Calu3 (cell line): ENCODE measurements at regions of chr12 and their contacts with region 1.

Region 1: DNA sequence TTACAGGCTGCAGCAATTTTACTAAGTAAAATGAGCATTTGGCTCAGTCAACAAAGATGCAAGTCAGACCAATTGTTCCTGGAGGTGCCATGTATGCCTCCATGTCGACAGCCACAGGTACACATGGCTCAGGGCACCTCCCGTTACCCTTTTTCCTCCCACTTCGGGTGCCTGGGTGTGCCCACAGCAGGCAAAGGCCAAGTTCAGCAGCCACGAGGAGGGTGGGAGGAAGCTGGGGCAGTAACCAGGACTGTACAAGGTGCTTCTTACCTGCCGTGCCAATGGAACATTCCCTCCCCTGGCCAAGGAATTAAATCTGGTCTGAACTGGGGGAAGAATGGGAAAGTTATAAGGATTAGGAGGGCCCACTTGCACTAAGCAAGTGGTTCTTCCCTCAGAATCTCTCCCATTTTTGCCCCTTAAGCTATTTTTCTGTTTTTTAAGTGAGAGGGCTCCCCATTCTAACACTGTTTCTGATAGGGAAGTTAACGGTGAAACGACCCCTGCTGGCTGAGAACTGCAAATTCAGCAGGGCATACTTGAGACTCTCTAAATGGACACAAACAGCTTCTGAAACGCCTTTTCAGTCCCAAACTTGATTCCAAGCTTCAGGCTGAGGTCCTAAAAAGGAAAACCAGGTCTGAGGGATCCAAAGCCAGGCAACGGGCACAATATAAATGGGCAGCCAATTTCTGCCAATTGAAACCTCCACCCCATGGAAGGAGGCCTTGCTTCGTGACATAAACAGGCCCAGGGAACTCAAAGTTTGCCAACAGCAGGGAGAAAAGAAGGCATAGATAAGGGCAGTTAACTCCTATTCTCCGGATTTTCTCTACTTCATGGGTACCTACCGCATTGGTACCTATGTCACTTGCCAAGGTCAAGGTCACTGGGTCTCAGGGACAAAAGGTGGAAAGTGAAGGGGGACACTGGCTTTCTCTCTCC is 24.8 kb downstream of the CLECL1 start:
- DNase-seq: peak; percentile 52
- H3K4me3 Mint-ChIP-seq: no peak overlapping the region
- H3K27ac Mint-ChIP-seq: no peak overlapping the region
- H3K4me1 Mint-ChIP-seq: peaks cover 25% of the 10 kb centered on the region
- H3K27me3 Mint-ChIP-seq: no peaks in the 10 kb centered on the region
- CTCF ChIP-seq: peak; percentile 78

Region 2: DNA sequence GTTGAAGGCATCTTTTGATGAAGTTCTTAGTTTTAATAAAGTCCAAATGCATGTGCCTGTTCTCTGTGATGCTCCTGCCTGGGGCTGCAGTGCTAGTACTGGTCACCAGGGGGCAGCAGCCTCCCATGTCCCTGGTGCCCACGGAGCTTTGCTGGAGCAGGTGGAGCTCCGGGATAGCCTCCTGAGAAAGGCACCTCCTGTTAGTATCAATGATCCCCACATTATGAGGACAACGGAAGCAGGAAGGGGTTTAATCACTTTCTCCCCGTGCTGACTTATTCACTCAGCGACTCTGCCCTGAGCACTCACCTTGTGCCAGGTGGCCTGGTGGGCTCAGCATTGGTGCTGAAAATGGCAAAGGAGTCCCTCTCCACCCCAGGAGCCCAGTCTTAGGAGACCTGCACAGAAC is 376.9 kb before region 1 on chr12:
- CTCF ChIA-PET with region 1: interaction called, 6 read pairs
- intact Hi-C with region 1: loop called (anchors 5 kb)
- DNase-seq: peak; percentile 81
- H3K4me3 Mint-ChIP-seq: no peak overlapping the region
- H3K27ac Mint-ChIP-seq: no peak overlapping the region
- H3K4me1 Mint-ChIP-seq: peaks cover 13% of the 10 kb centered on the region
- H3K27me3 Mint-ChIP-seq: no peaks in the 10 kb centered on the region
- CTCF ChIP-seq: peak; percentile 94

Region 3: GRCh38 chr12:9634177-9634803 is 73.8 kb before region 1 on chr12:
- CTCF ChIA-PET with region 1: interaction called, 4 read pairs
- intact Hi-C with region 1: loop called (anchors 1 kb)
- DNase-seq: peak; percentile 72
- H3K4me3 Mint-ChIP-seq: no peak overlapping the region
- H3K27ac Mint-ChIP-seq: no peak overlapping the region
- H3K4me1 Mint-ChIP-seq: peaks cover 26% of the 10 kb centered on the region
- H3K27me3 Mint-ChIP-seq: peaks cover 17% of the 10 kb centered on the region
- CTCF ChIP-seq: peak; percentile 69

Region 4: DNA sequence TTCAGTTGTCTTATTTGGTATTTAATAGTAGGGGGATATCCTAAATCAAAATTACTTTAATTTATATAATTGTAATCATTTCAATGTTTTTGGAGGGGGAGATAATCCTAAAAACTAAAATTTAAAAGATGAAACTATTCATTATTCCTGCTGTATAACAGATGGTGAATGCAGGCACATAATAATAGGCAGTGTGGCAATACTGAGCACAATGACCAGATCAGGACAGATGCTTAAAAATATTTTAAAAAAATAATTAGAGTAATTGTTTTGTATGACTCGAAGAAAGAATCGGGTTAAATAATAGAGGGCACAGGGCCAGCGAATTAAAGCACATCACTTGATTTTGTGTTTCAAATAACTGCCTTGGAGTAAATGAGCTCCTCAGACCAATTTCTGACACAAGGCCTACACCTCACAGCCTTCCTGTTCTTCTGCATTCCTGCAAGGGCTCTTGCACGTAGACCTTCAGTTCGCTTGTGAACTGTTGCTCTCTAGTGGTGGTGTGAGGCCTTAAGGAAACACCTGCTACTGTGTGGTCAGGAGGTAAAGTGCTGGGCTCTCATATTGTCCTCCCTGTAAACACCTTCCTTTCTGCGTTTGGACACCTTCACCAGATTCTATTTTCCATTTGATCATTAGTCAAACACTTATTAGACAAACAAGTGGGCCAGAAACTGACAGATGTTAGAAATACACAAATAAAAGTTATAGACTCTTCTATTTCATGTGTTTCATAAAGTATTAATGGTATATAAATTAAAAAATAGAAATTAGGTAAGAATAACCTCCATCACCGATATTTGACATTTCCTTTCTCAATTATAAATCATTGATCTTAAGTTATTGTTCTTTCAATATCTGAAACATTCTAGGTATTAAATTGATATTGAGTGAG is 89.8 kb after region 1 on chr12:
- CTCF ChIA-PET with region 1: no interaction called
- intact Hi-C with region 1: no loop called
- DNase-seq: peak; percentile 82
- H3K4me3 Mint-ChIP-seq: no peak overlapping the region
- H3K27ac Mint-ChIP-seq: no peak overlapping the region
- H3K4me1 Mint-ChIP-seq: peaks cover 21% of the 10 kb centered on the region
- H3K27me3 Mint-ChIP-seq: no peaks in the 10 kb centered on the region
- CTCF ChIP-seq: peak; percentile 82

Region 5: GRCh38 chr12:10182354-10183061 is 474.4 kb after region 1 on chr12:
- CTCF ChIA-PET with region 1: no interaction called
- intact Hi-C with region 1: no loop called
- DNase-seq: no peak
- H3K4me3 Mint-ChIP-seq: no peak overlapping the region
- H3K27ac Mint-ChIP-seq: no peak overlapping the region
- H3K4me1 Mint-ChIP-seq: no peaks in the 10 kb centered on the region
- H3K27me3 Mint-ChIP-seq: peaks cover 15% of the 10 kb centered on the region
- CTCF ChIP-seq: no peak